AG04449 (cell line): ENCODE measurements at regions of chr20 and their contacts with region 1.

Region 1: GRCh38 chr20:45771182-45771759 is 20.4 kb downstream of the WFDC3 start:
- DNase-seq: peak; percentile 26
- H3K4me3 ChIP-seq: no peak overlapping the region; the same call in 1 of the 2 replicates
- CTCF ChIP-seq: peak; percentile 79

Region 2: DNA sequence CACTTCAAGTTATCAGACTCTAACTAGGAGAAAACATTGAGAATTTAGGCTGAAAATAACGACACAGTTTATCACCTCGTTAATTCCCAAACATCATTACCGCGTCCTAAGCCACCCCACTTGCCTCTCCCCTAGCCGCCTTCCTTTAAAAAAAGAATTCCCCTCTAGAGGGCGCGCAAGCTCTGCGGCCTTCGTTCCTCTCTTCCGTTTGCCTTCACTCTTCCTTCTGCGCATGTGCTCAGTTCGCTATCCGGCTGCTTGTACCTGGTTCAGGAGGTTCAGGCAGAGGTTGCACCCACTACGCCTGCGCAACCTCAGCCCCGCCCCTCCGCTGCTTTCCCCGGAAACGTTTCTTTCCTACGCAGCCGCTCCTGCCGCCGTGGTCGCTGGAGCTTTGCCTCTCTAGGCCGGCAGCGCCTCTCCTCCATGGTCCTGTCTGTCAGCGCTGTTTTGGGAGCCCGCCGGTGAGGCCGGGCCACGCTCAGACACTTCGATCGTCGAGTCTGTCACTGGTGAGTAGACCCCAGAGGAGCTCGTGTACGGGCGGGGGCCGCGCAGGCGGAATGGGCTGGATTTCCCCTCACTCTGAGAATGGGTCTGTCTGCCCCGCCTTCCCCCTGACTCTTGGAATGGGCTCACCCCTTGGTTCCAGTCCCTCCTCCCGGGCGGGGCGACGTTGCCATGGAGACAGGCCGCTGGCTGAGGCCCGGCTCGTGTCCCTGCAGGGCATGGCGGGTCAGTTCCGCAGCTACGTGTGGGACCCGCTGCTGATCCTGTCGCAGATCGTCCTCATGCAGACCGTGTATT is 408.3 kb before region 1 on chr20 and contains the start of gene SYS1:
- CTCF ChIA-PET with region 1: interaction called, 15 read pairs
- POLR2A ChIA-PET with region 1: no interaction called
- DNase-seq: peak; percentile 90
- H3K4me3 ChIP-seq: peak within 1 kb of the TSS; percentile 96
- CTCF ChIP-seq: peak; percentile 87

Region 3: DNA sequence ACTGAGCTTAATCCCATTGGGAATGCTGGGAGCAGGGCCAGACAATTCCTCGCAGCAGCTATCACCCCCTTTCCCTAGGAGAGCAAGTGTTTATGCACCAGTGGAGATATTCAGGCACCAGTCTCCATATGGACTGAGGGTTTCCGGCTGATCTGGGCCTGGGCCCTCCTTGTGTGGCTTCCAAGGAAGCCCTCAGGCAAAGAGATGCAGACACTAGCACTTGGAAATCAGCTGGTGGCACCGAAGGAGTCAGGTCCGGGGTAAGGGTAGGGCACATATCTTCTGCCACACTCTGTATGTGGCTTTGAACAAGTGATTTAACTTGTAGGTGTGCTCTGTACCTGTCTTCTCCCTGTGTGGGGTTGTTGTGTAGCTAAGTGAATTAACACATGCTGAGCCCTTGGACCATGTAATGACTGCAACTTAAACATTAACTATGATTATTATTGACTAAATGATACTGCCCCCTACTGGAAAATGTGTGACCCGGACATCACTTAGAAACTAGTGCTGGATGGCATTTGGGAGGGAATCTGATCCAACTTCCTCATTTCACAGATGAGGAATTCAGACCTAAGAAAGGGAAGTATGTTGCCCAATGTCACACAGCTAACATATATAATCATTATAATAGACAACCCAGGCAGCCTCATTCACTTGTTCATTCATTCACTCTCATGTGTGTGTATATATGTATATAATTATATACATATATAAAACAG is 321.0 kb before region 1 on chr20:
- CTCF ChIA-PET with region 1: interaction called, 28 read pairs
- POLR2A ChIA-PET with region 1: no interaction called
- DNase-seq: no peak
- H3K4me3 ChIP-seq: no peak overlapping the region
- CTCF ChIP-seq: peak; percentile 49

Region 4: GRCh38 chr20:45552456-45552855 is 218.8 kb before region 1 on chr20:
- CTCF ChIA-PET with region 1: interaction called, 37 read pairs
- POLR2A ChIA-PET with region 1: no interaction called
- DNase-seq: no peak
- H3K4me3 ChIP-seq: no peak overlapping the region
- CTCF ChIP-seq: no peak

Region 5: GRCh38 chr20:45751721-45752120 is 19.6 kb before region 1 on chr20:
- CTCF ChIA-PET with region 1: interaction called, 16 read pairs
- POLR2A ChIA-PET with region 1: no interaction called
- DNase-seq: no peak
- H3K4me3 ChIP-seq: no peak overlapping the region
- CTCF ChIP-seq: no peak